Mucosa of descending colon (tissue), 3 donors: ENCODE measurements at regions of chr14 and their contacts with region 1.

Region 1: GRCh38 chr14:92686900-92687444 is 61.5 kb downstream of the LGMN start:
- DNase-seq: peak; percentile 79 to 89 (median 85)
- ATAC-seq: peak; percentile 90
- H3K4me3 ChIP-seq: no peak overlapping the region
- H3K4me1 ChIP-seq: peaks cover 5% of the 10 kb centered on the region
- CTCF ChIP-seq: peak; percentile 94

Region 2: DNA sequence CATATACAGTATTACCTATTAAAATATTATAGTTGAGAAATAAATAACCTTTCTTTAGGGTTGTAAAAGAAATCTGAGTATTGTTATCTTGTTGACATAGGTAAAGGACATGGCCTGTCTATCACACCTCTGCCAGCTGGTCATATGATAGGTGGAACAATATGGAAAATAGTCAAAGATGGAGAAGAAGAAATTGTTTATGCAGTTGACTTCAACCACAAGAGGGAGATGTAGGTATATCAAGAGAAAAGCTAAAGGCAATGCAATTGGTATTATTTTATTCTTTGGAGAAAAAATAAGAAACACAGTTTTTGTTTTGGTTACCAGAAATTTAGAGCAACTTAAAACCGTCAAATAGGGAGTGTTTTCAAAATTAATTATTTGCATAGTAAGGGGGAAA is 551.7 kb before region 1 on chr14:
- intact Hi-C with region 1: loop called in 1 of 2 experiments (anchors 10 kb)
- DNase-seq: no peak
- ATAC-seq: peak; percentile 61
- H3K4me3 ChIP-seq: no peak overlapping the region
- H3K4me1 ChIP-seq: no peaks in the 10 kb centered on the region
- CTCF ChIP-seq: no peak

Region 3: GRCh38 chr14:92783816-92784431 is 97.0 kb after region 1 on chr14:
- intact Hi-C with region 1: no loop called
- DNase-seq: peak in 1 of 3 donors; percentile 86
- ATAC-seq: peak; percentile 81
- H3K4me3 ChIP-seq: no peak overlapping the region
- H3K4me1 ChIP-seq: peaks cover 5% of the 10 kb centered on the region
- CTCF ChIP-seq: peak; percentile 38

Region 4: DNA sequence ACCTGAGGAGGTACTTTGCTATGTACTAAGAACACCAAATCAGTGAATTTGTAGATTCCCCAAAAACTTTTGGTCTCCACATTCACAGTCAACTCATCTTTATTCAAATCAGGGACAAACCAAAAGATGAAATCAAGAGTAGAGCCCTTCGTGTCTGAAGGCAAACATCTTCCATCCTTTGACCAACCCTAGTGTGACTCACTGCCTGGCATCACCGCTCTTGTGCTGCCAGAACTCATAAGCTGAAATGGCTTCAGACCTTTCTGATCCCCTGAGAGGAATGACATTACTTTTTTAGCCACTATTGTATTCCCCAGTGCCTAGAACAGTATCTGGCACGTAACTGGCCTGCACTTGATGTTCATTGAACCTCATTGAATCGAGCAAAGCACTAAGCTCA is 157.2 kb after region 1 on chr14:
- intact Hi-C with region 1: no loop called
- DNase-seq: no peak
- ATAC-seq: no peak
- H3K4me3 ChIP-seq: no peak overlapping the region
- H3K4me1 ChIP-seq: no peaks in the 10 kb centered on the region
- CTCF ChIP-seq: no peak